H1 (cell line): ENCODE measurements at regions of chr2 and their contacts with region 1.

Region 1: GRCh38 chr2:54704688-54705605 is 18.5 kb upstream of the EML6 start:
- DNase-seq: no peak
- H3K4me3 ChIP-seq: no peak overlapping the region
- H3K27ac ChIP-seq: no peak overlapping the region
- H3K4me1 ChIP-seq: peaks cover 0 to 8% (median under 1%) of the 10 kb centered on the region in 4 experiments; a peak in 4 of 7 replicates
- H3K27me3 ChIP-seq: peaks cover 0 to 9% (median 5%) of the 10 kb centered on the region in 4 experiments; a peak in 4 of 7 replicates
- CTCF ChIP-seq: peak in 2 of 3 experiments; percentile 34 to 39; a peak in 2 of 4 replicates
- EP300 ChIP-seq: no peak
- POLR2A ChIP-seq: no peak
- RAD21 ChIP-seq: peak; percentile 64 to 72

Region 2: GRCh38 chr2:54106631-54107454 is 598.1 kb before region 1 on chr2:
- CTCF ChIA-PET with region 1: interaction called, 27 read pairs
- POLR2A ChIA-PET with region 1: no interaction called
- DNase-seq: no peak
- H3K4me3 ChIP-seq: no peak overlapping the region
- H3K27ac ChIP-seq: no peak overlapping the region
- H3K4me1 ChIP-seq: peaks cover 0 to 4% (median 1%) of the 10 kb centered on the region in 4 experiments; a peak in 1 of 7 replicates
- H3K27me3 ChIP-seq: no peaks in the 10 kb centered on the region
- CTCF ChIP-seq: peak; percentile 43 to 79 (median 60)
- EP300 ChIP-seq: no peak
- POLR2A ChIP-seq: no peak
- RAD21 ChIP-seq: peak; percentile 78 to 82

Region 3: DNA sequence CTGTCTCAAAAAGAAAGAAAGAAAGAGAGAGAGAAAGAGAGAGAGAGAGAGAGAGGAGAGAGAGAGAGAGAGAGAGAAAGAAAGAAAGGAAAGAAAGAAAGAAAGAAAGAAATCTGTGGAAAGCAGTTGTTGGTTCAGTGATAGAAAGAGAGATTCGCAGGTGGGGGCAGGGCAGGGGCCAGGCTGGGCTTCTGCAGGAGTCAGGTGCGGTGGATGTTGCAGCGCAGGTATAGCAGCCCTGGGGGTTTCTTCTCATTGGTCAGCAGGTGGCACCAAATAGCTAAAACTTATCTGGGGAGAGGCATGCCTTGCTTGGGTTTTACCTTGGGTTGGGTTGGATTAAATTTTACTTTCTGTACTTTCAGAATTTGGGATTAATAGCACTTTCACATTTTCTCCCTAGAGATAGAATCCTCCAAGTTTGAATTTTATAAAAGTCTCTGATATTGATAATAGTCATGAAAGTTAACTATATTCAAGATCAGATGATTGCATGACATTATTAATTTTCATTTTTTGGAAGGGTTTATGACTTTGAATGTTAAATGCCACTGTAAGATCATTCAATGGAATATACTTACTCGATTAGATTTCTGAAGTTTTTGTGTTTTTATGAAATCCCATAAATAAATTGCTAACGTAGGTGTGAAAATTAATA is 182.2 kb before region 1 on chr2:
- CTCF ChIA-PET with region 1: interaction called, 13 read pairs
- POLR2A ChIA-PET with region 1: no interaction called
- DNase-seq: peak; percentile 50 to 68
- H3K4me3 ChIP-seq: no peak overlapping the region
- H3K27ac ChIP-seq: no peak overlapping the region
- H3K4me1 ChIP-seq: peaks cover 0 to 3% (median under 1%) of the 10 kb centered on the region in 4 experiments; a peak in 3 of 7 replicates
- H3K27me3 ChIP-seq: no peaks in the 10 kb centered on the region
- CTCF ChIP-seq: peak; percentile 62 to 77 (median 76)
- EP300 ChIP-seq: no peak
- POLR2A ChIP-seq: no peak
- RAD21 ChIP-seq: peak; percentile 87 to 90

Region 4: DNA sequence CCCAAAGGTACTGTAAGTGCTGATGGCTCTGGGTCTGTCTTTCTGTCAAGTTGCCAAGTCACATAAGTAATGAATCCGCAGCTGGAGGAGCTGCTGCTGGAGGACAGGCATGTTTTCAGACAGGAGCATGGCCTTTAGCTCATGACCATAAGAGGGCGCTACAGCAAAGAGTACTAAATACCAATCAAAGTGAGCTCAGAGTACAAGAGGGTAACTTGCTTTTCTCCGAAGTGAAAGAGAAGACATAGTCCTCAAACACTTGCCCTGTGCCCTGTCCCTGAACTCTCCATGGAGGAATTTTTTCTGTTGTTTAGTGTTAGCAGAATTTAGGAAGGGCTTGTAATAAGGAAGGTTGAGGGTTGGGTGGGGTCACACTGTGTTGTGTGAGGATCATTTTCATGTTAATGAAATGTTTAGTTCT is 39.5 kb before region 1 on chr2:
- CTCF ChIA-PET with region 1: interaction called, 179 read pairs
- POLR2A ChIA-PET with region 1: no interaction called
- DNase-seq: peak in 1 of 2 experiments; percentile 61
- H3K4me3 ChIP-seq: no peak overlapping the region
- H3K27ac ChIP-seq: no peak overlapping the region
- H3K4me1 ChIP-seq: peaks cover 0 to 3% (median 0%) of the 10 kb centered on the region in 4 experiments; a peak in 3 of 7 replicates
- H3K27me3 ChIP-seq: no peaks in the 10 kb centered on the region
- CTCF ChIP-seq: peak; percentile 46 to 81 (median 64)
- EP300 ChIP-seq: no peak
- POLR2A ChIP-seq: no peak
- RAD21 ChIP-seq: peak; percentile 60 to 72

Region 5: GRCh38 chr2:54685263-54685775 is 19.6 kb before region 1 on chr2:
- CTCF ChIA-PET with region 1: interaction called, 71 read pairs
- POLR2A ChIA-PET with region 1: no interaction called
- DNase-seq: no peak
- H3K4me3 ChIP-seq: no peak overlapping the region
- H3K27ac ChIP-seq: no peak overlapping the region
- H3K4me1 ChIP-seq: no peaks in the 10 kb centered on the region
- H3K27me3 ChIP-seq: no peaks in the 10 kb centered on the region
- CTCF ChIP-seq: no peak
- EP300 ChIP-seq: no peak
- POLR2A ChIP-seq: no peak
- RAD21 ChIP-seq: no peak

Region 6: GRCh38 chr2:54801352-54801751 is 96.4 kb after region 1 on chr2:
- CTCF ChIA-PET with region 1: no interaction called
- POLR2A ChIA-PET with region 1: no interaction called
- DNase-seq: no peak
- H3K4me3 ChIP-seq: no peak overlapping the region
- H3K27ac ChIP-seq: no peak overlapping the region
- H3K4me1 ChIP-seq: 0 out of 7 replicates have a peak, but pooled peaks cover 0 to 2% (median 0%) of the 10 kb centered on the region in 4 experiments
- H3K27me3 ChIP-seq: no peaks in the 10 kb centered on the region
- CTCF ChIP-seq: no peak
- EP300 ChIP-seq: no peak
- POLR2A ChIP-seq: no peak
- RAD21 ChIP-seq: no peak

Region 7: DNA sequence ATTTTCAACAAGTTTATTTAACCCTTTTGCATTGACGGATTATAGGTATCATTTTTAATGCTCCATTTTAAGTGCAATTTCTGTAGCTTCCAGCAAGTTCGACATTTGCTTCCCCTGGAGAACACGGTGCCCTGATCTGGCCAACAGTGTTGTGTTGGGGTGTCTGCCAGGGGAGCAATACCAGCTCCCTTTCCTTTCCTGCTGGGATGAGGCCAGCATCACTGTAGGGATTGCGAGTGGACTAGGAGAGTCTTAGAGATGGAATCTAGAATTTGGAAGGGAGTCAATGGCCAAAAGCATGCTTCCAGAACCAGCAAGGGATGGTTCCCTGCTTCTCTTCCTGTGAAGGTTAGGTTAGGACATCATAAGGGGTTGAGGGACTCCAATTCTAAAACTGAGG is 210.2 kb after region 1 on chr2:
- CTCF ChIA-PET with region 1: no interaction called
- POLR2A ChIA-PET with region 1: no interaction called
- DNase-seq: no peak
- H3K4me3 ChIP-seq: no peak overlapping the region
- H3K27ac ChIP-seq: no peak overlapping the region
- H3K4me1 ChIP-seq: no peaks in the 10 kb centered on the region
- H3K27me3 ChIP-seq: no peaks in the 10 kb centered on the region
- CTCF ChIP-seq: no peak
- EP300 ChIP-seq: no peak
- POLR2A ChIP-seq: no peak
- RAD21 ChIP-seq: no peak